MCF 10A (cell line): ENCODE measurements at regions of chr1 and their contacts with region 1.

Region 1: GRCh38 chr1:214632091-214632490 is 29.1 kb downstream of the CENPF start:
- DNase-seq: no peak
- H3K4me3 Mint-ChIP-seq: no peak overlapping the region
- H3K27ac Mint-ChIP-seq: peak overlapping the region; percentile 66
- H3K4me1 Mint-ChIP-seq: peaks cover 4% of the 10 kb centered on the region
- H3K27me3 Mint-ChIP-seq: no peaks in the 10 kb centered on the region
- CTCF ChIP-seq: no peak

Region 2: DNA sequence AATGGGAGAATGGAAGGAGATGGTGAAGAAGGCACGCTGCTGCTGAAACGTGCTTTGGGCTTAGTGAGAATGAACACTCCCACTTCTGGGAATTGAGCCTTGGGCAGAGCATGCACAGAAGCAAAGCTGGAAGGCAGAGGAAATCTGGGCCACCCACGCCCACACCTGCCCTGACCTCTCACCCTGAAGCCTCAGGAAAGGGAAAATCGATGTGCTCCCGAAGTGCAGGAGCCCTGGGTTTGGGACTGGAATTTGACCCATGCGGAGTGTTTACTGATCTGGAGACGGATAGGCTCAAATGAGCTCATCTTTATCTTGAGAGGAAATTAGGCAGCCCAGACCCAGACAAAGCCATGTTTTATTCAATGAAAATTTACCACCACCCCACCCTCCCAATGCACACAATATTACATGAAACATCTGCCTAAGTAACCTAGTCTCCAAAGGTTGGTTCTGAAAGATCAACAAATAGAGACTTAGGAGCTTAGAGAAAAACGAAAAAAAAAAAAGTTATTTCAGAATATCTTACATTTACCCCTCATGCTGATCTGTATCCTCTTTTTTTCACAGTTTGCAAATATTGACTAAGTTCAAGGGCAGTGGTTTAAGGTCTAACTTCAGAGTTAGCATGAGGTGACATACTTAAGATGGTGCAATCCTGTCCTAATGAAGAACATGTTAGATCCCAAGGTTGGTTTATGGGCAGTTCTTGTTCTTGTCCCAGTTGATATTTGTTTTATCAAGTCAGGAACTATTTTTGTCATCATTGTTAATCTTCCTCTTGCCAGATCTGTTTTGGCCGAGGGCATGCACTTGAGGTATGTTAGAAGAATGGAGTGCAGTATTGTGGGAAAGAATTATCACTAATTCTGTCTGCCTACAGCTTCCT is 581.3 kb before region 1 on chr1:
- CTCF ChIA-PET with region 1: no interaction called
- POLR2A ChIA-PET with region 1: no interaction called
- intact Hi-C with region 1: no loop called
- DNase-seq: no peak
- H3K4me3 Mint-ChIP-seq: no peak overlapping the region
- H3K27ac Mint-ChIP-seq: no peak overlapping the region
- H3K4me1 Mint-ChIP-seq: no peaks in the 10 kb centered on the region
- H3K27me3 Mint-ChIP-seq: peaks cover 21% of the 10 kb centered on the region
- CTCF ChIP-seq: no peak

Region 3: GRCh38 chr1:214377886-214378285 is 254.2 kb before region 1 on chr1:
- CTCF ChIA-PET with region 1: interaction called, 12 read pairs
- POLR2A ChIA-PET with region 1: interaction called, 3 read pairs
- intact Hi-C with region 1: no loop called
- DNase-seq: no peak
- H3K4me3 Mint-ChIP-seq: no peak overlapping the region
- H3K27ac Mint-ChIP-seq: peak overlapping the region; percentile 47
- H3K4me1 Mint-ChIP-seq: peaks cover 11% of the 10 kb centered on the region
- H3K27me3 Mint-ChIP-seq: no peaks in the 10 kb centered on the region
- CTCF ChIP-seq: no peak

Region 4: DNA sequence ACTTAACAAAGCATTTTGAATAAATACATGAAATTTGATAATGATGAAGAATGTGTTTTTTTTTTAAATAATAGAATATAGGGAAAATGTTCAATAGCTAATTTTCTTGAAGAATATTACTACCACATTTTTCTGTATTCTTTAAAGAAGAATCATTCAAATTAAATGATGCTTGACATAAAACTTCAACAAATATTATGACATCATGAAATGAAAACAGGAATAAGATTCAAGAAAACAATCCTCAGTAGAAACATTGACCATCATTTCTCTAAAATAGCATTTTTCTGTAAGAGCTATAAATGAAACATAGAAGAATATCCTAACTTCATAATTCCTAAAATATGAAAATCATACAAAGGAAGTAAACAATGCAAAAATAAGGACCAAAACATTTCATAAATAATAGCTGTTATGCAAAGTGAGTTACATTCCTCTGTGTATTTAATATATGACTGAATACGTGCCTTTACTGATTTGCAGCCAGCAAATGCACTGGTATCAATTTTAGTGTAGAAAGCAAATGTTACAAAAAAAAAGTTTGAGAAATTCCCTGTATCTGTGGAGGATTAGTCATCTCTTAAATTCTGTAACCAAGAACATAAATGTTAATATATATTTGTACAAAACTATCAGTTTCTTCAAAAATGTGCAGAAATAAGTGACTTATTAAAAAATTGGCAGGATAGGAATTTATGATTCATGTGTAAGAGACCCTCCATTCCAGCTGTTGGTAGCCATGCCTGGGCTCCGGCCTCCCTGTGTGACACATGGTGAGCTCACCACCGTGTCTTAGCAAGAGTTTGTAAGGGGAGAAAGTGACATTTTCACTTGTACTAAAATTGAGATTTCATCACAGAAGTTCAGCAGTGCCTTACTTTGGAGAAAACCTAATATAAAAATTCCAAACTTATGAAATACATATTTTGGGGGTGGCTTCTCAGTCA is 65.7 kb before region 1 on chr1:
- CTCF ChIA-PET with region 1: no interaction called
- POLR2A ChIA-PET with region 1: no interaction called
- intact Hi-C with region 1: no loop called
- DNase-seq: peak; percentile 85
- H3K4me3 Mint-ChIP-seq: no peak overlapping the region
- H3K27ac Mint-ChIP-seq: peak overlapping the region; percentile 36
- H3K4me1 Mint-ChIP-seq: peaks cover 51% of the 10 kb centered on the region
- H3K27me3 Mint-ChIP-seq: no peaks in the 10 kb centered on the region
- CTCF ChIP-seq: no peak

Region 5: DNA sequence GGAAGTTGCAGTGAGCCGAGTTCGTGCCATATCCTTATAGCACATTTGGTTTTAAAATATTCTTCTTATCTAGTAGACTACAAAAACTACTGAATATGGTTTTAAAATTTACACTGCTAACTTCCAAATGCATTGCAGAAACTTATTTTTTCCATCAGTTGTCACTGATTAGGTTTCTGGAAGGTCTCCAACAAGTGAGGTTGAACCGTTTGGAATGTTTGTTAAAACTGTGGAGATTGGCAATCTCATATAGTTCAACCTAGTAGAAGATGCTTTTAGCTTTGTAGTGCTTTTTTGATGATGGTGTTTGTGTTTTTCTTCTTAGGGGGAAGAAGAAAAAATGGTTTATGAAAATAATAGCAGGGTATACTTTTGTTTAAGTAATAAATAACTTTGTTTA is 16.2 kb before region 1 on chr1:
- CTCF ChIA-PET with region 1: interaction called, 264 read pairs
- POLR2A ChIA-PET with region 1: interaction called, 3 read pairs
- intact Hi-C with region 1: no loop called
- DNase-seq: no peak
- H3K4me3 Mint-ChIP-seq: no peak overlapping the region
- H3K27ac Mint-ChIP-seq: peak overlapping the region; percentile 84
- H3K4me1 Mint-ChIP-seq: peaks cover 38% of the 10 kb centered on the region
- H3K27me3 Mint-ChIP-seq: no peaks in the 10 kb centered on the region
- CTCF ChIP-seq: no peak

Region 6: GRCh38 chr1:215146341-215146826 is 514.3 kb after region 1 on chr1:
- CTCF ChIA-PET with region 1: interaction called, 41 read pairs
- POLR2A ChIA-PET with region 1: no interaction called
- intact Hi-C with region 1: loop called (anchors 1 kb)
- DNase-seq: peak; percentile 77
- H3K4me3 Mint-ChIP-seq: no peak overlapping the region
- H3K27ac Mint-ChIP-seq: no peak overlapping the region
- H3K4me1 Mint-ChIP-seq: no peaks in the 10 kb centered on the region
- H3K27me3 Mint-ChIP-seq: no peaks in the 10 kb centered on the region
- CTCF ChIP-seq: peak; percentile 98

Region 7: DNA sequence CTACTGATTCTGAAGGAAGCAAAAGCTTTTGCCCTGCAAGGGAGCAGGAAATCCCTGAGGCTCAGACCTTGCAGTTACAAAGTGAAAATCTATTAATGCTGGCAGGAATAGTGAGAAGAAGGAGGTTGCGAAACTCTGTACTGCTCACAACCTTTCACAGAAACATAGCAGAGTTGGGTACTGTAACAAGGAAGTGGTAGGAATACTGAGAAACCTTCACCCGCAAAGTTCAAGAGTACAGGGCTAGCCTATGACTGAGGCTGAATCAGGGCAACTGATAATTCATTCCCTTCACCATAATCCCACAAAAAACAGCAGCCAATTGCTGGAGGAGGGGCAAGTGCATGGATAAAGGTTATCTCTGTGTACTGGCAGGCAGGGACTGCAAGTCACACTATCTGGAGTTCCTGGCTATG is 911.1 kb after region 1 on chr1:
- CTCF ChIA-PET with region 1: interaction called, 11 read pairs
- POLR2A ChIA-PET with region 1: no interaction called
- intact Hi-C with region 1: no loop called
- DNase-seq: peak; percentile 79
- H3K4me3 Mint-ChIP-seq: no peak overlapping the region
- H3K27ac Mint-ChIP-seq: peak overlapping the region; percentile 24
- H3K4me1 Mint-ChIP-seq: peaks cover 35% of the 10 kb centered on the region
- H3K27me3 Mint-ChIP-seq: no peaks in the 10 kb centered on the region
- CTCF ChIP-seq: no peak